Caco-2 (cell line): ENCODE measurements at regions of chr11 and their contacts with region 1.

Region 1: GRCh38 chr11:25970726-25971508 is 361.0 kb upstream of the ANO3 start:
- DNase-seq: peak in 1 of 2 experiments; percentile 6
- H3K4me3 ChIP-seq: no peak overlapping the region
- H3K4me3 Mint-ChIP-seq: no peak overlapping the region
- H3K27ac Mint-ChIP-seq: no peak overlapping the region
- H3K4me1 ChIP-seq: no peaks in the 10 kb centered on the region
- H3K4me1 Mint-ChIP-seq: no peaks in the 10 kb centered on the region
- H3K27me3 ChIP-seq: no peaks in the 10 kb centered on the region
- H3K27me3 Mint-ChIP-seq: no peaks in the 10 kb centered on the region
- CTCF ChIP-seq: peak; percentile 15 to 49

Region 2: DNA sequence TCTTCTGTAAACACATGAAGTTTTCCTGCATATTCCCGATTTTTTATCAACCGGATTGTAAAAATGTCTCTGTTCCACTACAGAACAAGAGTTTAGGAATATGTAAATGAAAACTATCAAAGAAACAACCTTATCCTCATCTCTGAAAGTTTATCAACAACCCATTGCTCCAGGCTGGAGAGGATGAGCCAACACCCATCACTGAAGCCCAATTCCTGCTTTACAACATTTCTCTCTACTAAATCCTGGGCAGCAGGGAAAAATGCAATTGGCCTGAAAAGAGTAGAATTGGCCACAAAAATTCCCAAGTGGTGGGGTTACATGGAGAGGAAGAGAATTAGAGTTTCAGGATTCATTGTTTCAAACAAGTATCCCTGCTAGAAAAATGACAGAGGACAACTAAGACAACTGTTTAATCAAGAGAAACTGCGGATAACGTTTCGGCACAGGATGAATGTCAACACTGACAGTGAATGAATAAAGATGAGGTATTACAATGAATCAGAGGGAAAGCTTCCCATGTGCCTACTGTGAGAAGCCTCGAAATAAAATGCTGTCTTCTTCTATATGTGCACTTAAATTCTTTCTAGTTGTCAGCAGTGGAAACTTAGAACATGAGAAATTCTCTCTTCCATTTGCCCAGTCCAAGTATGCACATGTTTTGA is 43.7 kb after region 1 on chr11:
- CTCF ChIA-PET with region 1: no interaction called
- POLR2A ChIA-PET with region 1: no interaction called
- intact Hi-C with region 1: loop called (anchors 1 kb)
- DNase-seq: no peak
- H3K4me3 ChIP-seq: no peak overlapping the region
- H3K4me3 Mint-ChIP-seq: no peak overlapping the region
- H3K27ac Mint-ChIP-seq: no peak overlapping the region
- H3K4me1 ChIP-seq: no peaks in the 10 kb centered on the region
- H3K4me1 Mint-ChIP-seq: peaks cover 6% of the 10 kb centered on the region
- H3K27me3 ChIP-seq: no peaks in the 10 kb centered on the region
- H3K27me3 Mint-ChIP-seq: no peaks in the 10 kb centered on the region
- CTCF ChIP-seq: no peak